ENCODE measurements at regions of chr2 and their contacts with region 1.

Region 1: GRCh38 chr2:234368861-234369261 is 128.0 kb downstream of the ARL4C start:
- DNase-seq: no peak
- ATAC-seq: peak; percentile 85

Region 2: DNA sequence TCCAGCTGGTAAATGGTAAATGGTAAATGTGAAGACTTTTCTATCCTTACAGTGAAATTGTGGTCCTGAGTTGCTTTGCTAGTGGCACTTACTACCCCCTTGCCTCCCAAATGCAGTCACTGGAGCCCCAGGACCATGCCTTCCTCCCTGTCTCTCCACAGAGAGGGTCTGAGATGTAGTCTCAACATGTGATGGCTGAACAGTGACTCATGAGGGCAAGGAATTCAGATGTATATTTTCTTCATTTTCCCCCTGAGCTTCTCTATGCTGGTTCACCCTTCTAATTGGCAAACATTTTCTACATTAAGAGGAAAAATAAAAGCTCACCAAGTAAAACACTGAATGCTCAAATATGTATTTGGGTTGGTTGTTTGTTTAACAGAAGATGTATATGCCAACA is 814.9 kb after region 1 on chr2:
- intact Hi-C with region 1: loop called (anchors 10 kb)
- DNase-seq: no peak
- ATAC-seq: no peak